IMR-90 (cell line): ENCODE measurements at regions of chr9 and their contacts with region 1.

Region 1: DNA sequence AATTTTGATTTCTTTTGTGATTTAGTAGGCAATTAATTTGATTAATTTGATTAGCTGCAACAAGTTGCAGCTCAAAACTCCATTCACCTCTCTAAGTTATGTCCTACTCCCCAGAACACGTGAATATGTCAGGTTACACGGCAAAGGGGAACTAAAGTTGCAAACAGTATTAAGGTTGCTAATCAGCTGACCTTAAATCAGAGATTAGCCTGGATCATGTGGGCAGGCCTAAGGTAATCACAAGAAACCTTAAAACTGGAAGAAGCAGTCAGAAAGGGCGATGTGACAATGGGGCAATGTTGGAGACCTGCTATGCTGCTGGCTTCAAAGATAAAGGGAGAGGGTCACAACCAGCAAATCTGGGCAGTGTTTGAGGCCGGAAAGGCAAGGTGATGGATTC is 47.3 kb upstream of the ANXA1 start:
- DNase-seq: no peak
- ATAC-seq: no peak
- H3K4me3 ChIP-seq: no peak overlapping the region
- H3K27ac ChIP-seq: no peak overlapping the region
- H3K4me1 ChIP-seq: no peaks in the 10 kb centered on the region
- H3K27me3 ChIP-seq: no peaks in the 10 kb centered on the region; the same call in 1 of the 2 replicates
- CTCF ChIP-seq: no peak
- POLR2A ChIP-seq: no peak
- RAD21 ChIP-seq: no peak

Region 2: GRCh38 chr9:73151653-73152542 is 47.6 kb after region 1 on chr9 and contains the start of gene ANXA1:
- CTCF ChIA-PET with region 1: interaction called, 12 read pairs
- POLR2A ChIA-PET with region 1: no interaction called
- dilution Hi-C with region 1: no loop called
- in situ Hi-C with region 1: no loop called
- intact Hi-C with region 1: no loop called
- DNase-seq: peak; percentile 83
- ATAC-seq: peak; percentile 52
- H3K4me3 ChIP-seq: peak within 1 kb of the TSS; percentile 96
- H3K27ac ChIP-seq: peak within 1 kb of the TSS; percentile 90
- H3K4me1 ChIP-seq: peaks cover 5% of the 10 kb centered on the region
- H3K27me3 ChIP-seq: no peaks in the 10 kb centered on the region
- CTCF ChIP-seq: no peak
- POLR2A ChIP-seq: peak; percentile 98
- RAD21 ChIP-seq: no peak
- total RNA-seq, gene ANXA1: 583 and 637 TPM in 2 replicates

Region 3: DNA sequence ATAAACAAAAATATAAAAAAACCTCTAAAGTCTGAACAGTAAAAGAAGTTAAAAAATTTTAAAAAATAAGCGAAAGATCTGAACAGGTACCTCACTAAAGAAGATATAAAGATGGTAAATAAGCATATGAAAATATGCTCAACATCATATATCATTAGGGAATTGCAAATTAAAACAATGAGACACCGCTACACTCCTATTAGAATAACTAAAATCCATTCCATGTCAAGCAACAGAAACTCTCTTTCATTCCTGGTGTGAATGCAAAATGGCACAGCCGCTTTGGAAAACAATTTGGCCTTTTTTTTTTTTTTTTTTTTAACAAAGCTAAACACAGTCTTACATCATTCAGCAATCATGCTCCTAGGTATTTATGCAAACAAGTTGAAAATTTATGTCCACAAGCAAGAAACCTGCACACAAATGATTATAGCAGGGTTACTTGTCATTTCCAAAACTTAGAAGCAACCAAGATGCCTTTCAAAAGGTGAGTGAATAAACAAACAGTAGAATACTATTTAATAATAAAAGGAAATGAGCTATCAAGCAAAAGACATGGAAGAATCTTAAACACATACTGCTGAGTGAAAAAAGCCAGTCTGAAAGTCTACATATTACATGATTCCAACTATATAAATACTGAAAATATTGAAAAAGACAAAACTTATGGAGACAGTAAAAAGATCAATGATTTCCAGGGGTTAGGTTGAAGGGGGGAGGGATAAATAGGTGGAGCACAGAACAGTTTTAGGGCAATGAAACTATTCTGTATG is 69.4 kb after region 1 on chr9:
- CTCF ChIA-PET with region 1: interaction called, 12 read pairs
- POLR2A ChIA-PET with region 1: interaction called, 6 read pairs
- dilution Hi-C with region 1: no loop called
- in situ Hi-C with region 1: no loop called
- intact Hi-C with region 1: no loop called
- DNase-seq: no peak
- ATAC-seq: no peak
- H3K4me3 ChIP-seq: no peak overlapping the region
- H3K27ac ChIP-seq: no peak overlapping the region
- H3K4me1 ChIP-seq: no peaks in the 10 kb centered on the region
- H3K27me3 ChIP-seq: no peaks in the 10 kb centered on the region
- CTCF ChIP-seq: no peak
- POLR2A ChIP-seq: peak; percentile 13; the same call in 1 of the 2 replicates
- RAD21 ChIP-seq: no peak

Region 4: GRCh38 chr9:73183917-73184861 is 79.8 kb after region 1 on chr9:
- CTCF ChIA-PET with region 1: interaction called, 26 read pairs
- POLR2A ChIA-PET with region 1: no interaction called
- dilution Hi-C with region 1: no loop called
- in situ Hi-C with region 1: loop called (anchors 5 kb)
- intact Hi-C with region 1: loop called (anchors 1 kb)
- DNase-seq: peak; percentile 65
- ATAC-seq: peak; percentile 32
- H3K4me3 ChIP-seq: no peak overlapping the region
- H3K27ac ChIP-seq: no peak overlapping the region
- H3K4me1 ChIP-seq: 0 out of 2 replicates have a peak, but pooled peaks cover 1% of the 10 kb centered on the region
- H3K27me3 ChIP-seq: peaks cover 3% of the 10 kb centered on the region; the same call in 1 of the 2 replicates
- CTCF ChIP-seq: peak; percentile 63
- POLR2A ChIP-seq: no peak
- RAD21 ChIP-seq: peak; percentile 73